ENCODE measurements at regions of chr2 and their contacts with region 1.

Region 1: GRCh38 chr2:232250246-232251175 is 128.0 kb upstream of the ALPP start:
- DNase-seq: no peak
- H3K4me3 ChIP-seq: no peak overlapping the region
- H3K27ac ChIP-seq: no peak overlapping the region
- H3K4me1 ChIP-seq: no peaks in the 10 kb centered on the region
- H3K27me3 ChIP-seq: no peaks in the 10 kb centered on the region
- CTCF ChIP-seq: no peak

Region 2: GRCh38 chr2:232224578-232224977 is 25.9 kb before region 1 on chr2:
- CTCF ChIA-PET with region 1: no interaction called
- dilution Hi-C with region 1: loop called (anchors 5 kb)
- in situ Hi-C with region 1: no loop called
- intact Hi-C with region 1: no loop called
- DNase-seq: no peak
- H3K4me3 ChIP-seq: no peak overlapping the region
- H3K27ac ChIP-seq: no peak overlapping the region
- H3K4me1 ChIP-seq: no peaks in the 10 kb centered on the region
- H3K27me3 ChIP-seq: no peaks in the 10 kb centered on the region
- CTCF ChIP-seq: no peak

Region 3: DNA sequence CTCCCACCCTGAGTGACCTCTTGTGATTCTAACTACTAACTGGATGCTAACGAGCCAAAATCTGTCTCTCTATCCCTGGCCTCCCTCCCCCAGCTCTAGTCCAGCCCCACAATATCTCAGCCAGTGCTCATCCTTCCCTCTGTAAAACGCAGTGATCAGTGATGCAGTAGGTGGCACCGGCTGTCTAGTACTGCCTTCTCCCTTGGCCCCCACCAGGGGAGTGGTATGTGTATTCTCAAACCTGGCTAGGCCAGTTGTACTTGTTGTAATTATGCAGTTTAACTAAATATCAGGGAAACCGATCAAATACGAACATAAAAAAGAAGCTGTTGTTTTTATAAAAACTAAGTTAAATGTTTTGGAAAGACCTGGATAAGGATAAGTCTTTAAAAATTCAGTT is 14.8 kb after region 1 on chr2:
- CTCF ChIA-PET with region 1: no interaction called
- dilution Hi-C with region 1: no loop called
- in situ Hi-C with region 1: no loop called
- intact Hi-C with region 1: no loop called
- DNase-seq: no peak
- H3K4me3 ChIP-seq: no peak overlapping the region
- H3K27ac ChIP-seq: no peak overlapping the region
- H3K4me1 ChIP-seq: peaks cover 4% of the 10 kb centered on the region
- H3K27me3 ChIP-seq: no peaks in the 10 kb centered on the region
- CTCF ChIP-seq: no peak

Region 4: GRCh38 chr2:232286001-232286868 is 35.7 kb after region 1 on chr2:
- CTCF ChIA-PET with region 1: no interaction called
- dilution Hi-C with region 1: loop called (anchors 5 kb)
- in situ Hi-C with region 1: no loop called
- intact Hi-C with region 1: no loop called
- DNase-seq: peak; percentile 78
- H3K4me3 ChIP-seq: no peak overlapping the region
- H3K27ac ChIP-seq: peak overlapping the region; percentile 10
- H3K4me1 ChIP-seq: peaks cover 15% of the 10 kb centered on the region
- H3K27me3 ChIP-seq: no peaks in the 10 kb centered on the region
- CTCF ChIP-seq: no peak

Region 5: DNA sequence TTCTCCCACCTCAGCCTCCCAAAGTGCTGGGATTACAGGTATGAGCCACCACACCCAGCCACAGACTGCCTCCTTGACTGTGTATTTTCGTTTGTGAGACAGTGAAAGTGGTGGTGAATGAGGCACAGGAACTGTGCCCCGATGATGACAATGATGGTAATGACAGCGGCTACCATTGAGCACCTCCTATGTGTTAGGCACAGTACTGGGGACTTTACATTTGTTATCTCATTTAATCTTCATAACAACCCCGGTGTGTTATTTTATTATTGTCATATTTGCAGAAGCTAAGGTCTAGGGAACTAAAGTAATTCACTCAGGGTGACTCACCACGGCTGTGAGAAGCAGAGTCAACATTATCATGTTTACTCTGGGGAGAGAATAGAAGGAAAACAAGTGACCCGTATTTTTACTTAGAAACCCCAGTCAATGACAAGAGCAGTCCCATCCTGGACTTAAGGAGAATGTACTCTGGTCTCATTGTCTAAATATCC is 50.4 kb after region 1 on chr2:
- CTCF ChIA-PET with region 1: no interaction called
- dilution Hi-C with region 1: no loop called
- in situ Hi-C with region 1: no loop called
- intact Hi-C with region 1: no loop called
- DNase-seq: no peak
- H3K4me3 ChIP-seq: no peak overlapping the region
- H3K27ac ChIP-seq: no peak overlapping the region
- H3K4me1 ChIP-seq: peaks cover 9% of the 10 kb centered on the region
- H3K27me3 ChIP-seq: no peaks in the 10 kb centered on the region
- CTCF ChIP-seq: no peak